ENCODE measurements at regions of chr19 and their contacts with region 1.

Region 1: GRCh38 chr19:16771618-16772017 is 52.0 kb downstream of the NWD1 start:
- DNase-seq: peak; percentile 77
- H3K4me3 Mint-ChIP-seq: no peak overlapping the region
- H3K27ac Mint-ChIP-seq: no peak overlapping the region
- H3K4me1 Mint-ChIP-seq: no peaks in the 10 kb centered on the region
- H3K27me3 Mint-ChIP-seq: peaks cover 19% of the 10 kb centered on the region

Region 2: GRCh38 chr19:16795721-16796120 is 24.1 kb after region 1 on chr19:
- CTCF ChIA-PET with region 1: no interaction called
- POLR2A ChIA-PET with region 1: no interaction called
- DNase-seq: no peak
- H3K4me3 Mint-ChIP-seq: no peak overlapping the region
- H3K27ac Mint-ChIP-seq: no peak overlapping the region
- H3K4me1 Mint-ChIP-seq: no peaks in the 10 kb centered on the region
- H3K27me3 Mint-ChIP-seq: no peaks in the 10 kb centered on the region

Region 3: DNA sequence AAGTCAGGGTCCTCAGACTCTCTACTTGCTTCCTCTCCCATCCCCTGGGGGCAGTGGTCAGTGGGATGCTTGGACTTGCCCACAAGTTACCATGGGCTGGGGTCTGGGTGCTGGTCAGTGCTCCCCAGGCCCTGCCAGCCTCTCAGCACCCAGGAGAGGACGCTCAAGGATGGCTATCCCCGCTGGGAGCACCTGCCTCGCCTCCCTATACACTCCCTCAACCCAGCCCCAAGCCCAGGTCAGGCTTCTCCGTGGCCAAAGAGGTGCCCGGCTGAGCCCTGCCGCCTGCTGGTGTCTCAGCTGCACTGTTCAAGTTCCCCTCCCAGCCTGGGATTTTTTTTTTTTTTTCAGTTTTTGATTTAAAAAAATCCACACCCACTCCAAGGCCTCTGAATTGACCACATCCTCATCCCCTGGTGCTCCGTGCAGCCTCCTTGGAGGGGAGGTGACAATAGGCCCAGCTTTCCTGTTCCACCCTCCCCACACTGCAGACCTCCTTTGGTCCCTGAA is 128.0 kb after region 1 on chr19:
- CTCF ChIA-PET with region 1: interaction called, 15 read pairs
- POLR2A ChIA-PET with region 1: no interaction called
- DNase-seq: peak; percentile 59
- H3K4me3 Mint-ChIP-seq: peak overlapping the region; percentile 30
- H3K27ac Mint-ChIP-seq: no peak overlapping the region
- H3K4me1 Mint-ChIP-seq: peaks cover 24% of the 10 kb centered on the region
- H3K27me3 Mint-ChIP-seq: peaks cover 17% of the 10 kb centered on the region

Region 4: GRCh38 chr19:17052439-17053210 is 281.0 kb after region 1 on chr19:
- CTCF ChIA-PET with region 1: interaction called, 12 read pairs
- POLR2A ChIA-PET with region 1: no interaction called
- DNase-seq: peak; percentile 43
- H3K4me3 Mint-ChIP-seq: no peak overlapping the region
- H3K27ac Mint-ChIP-seq: no peak overlapping the region
- H3K4me1 Mint-ChIP-seq: no peaks in the 10 kb centered on the region
- H3K27me3 Mint-ChIP-seq: no peaks in the 10 kb centered on the region